Left ventricle myocardium superior (tissue), 1 donor: ENCODE measurements at regions of chr3 and their contacts with region 1.

Region 1: GRCh38 chr3:128787256-128788240 is 61.6 kb downstream of the RAB7A start:
- DNase-seq: no peak
- ATAC-seq: no peak

Region 2: GRCh38 chr3:128572644-128573105 is 214.9 kb before region 1 on chr3:
- intact Hi-C with region 1: no loop called
- DNase-seq: no peak
- ATAC-seq: no peak

Region 3: DNA sequence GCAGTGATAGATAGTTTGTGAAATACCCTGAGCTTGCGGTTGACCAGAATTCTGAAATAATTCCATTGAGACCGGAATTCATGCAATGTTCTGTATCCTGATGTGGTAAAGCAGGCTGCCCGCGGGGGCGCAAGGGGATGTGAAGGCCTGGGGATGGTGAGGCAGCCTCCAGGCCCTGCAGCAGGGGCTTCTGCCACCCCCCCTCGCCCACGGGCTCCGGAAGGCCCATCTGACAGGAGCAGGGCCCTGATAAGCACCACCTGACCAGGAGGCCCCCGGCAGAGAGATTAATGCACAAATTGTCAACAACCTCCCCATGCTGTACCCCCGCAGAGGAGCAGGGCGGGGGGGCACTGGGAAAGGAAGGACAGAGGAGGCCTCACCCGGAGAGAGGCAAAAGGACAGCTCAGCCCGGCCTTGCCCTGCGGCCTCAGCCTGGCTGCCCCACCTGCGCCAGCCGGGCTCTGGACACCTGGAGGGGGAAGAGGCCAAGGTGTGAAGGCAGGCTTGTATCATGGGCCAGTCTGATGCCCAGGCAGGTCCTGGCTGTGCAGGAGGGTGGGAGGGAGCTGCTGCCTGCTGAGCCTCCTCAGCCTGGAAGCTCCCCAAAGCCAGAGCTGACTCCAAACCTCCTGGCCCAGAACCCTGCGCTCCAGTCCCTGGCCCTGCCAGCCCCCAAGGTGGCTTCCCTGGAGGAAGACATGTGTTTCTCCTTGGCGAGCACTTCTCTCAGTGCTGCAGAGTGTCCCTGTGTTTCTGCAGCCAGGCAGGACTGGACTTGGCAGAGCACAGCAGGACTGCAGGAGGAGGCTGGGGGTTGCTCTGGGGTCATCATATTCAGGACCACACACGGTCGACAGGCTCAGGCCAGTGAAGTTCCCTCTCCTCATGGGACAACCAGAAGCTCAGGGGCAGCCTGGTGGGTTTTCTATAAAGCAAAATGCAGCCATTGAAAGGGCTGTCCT is 183.5 kb before region 1 on chr3:
- intact Hi-C with region 1: no loop called
- DNase-seq: no peak
- ATAC-seq: no peak

Region 4: GRCh38 chr3:128736601-128737000 is 50.9 kb before region 1 on chr3:
- intact Hi-C with region 1: loop called (anchors 10 kb)
- DNase-seq: no peak
- ATAC-seq: no peak

Region 5: DNA sequence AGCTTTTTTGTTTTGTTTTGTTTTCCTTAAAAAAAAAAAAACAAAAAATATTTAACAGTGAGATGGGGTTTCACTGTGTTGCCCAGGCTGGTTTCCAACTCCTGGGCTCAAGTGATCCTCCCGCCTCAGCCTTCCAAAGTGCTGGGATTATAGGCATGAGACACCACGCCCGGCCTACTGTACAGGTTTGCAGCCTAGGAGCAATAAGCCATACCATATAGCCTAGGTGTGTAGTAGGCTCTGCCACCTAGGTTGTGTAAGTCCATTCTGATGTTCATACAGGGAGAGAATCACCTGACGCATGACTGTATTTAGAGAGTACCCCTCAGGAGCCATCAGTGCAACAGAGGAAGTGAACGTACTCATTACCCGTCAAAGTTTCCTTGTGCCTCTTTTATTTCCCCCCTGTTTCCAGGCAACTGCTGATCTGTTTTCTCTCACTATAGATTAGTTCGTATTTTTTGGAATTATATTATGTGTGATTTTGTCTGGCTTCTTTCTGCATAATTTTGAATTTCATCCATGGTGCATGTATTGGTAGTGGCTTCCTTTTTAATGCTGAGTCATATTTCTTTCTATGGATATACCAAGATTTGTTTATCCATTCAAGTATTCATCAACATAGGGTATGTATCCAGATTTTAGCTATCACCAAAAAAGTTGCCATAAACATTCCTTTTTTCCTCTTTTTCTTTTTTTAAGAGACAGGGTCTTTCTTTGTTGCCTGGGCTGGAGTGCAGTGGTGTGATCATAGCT is 101.8 kb after region 1 on chr3:
- intact Hi-C with region 1: no loop called
- DNase-seq: no peak
- ATAC-seq: no peak

Region 6: GRCh38 chr3:128946411-128946810 is 158.9 kb after region 1 on chr3:
- intact Hi-C with region 1: no loop called
- DNase-seq: no peak
- ATAC-seq: no peak